ENCODE measurements at regions of chr19 and their contacts with region 1.

Region 1: GRCh38 chr19:52139252-52140031 is at the start of gene ZNF616:
- DNase-seq: peak; percentile 47 to 98 (median 82)
- ATAC-seq: peak; percentile 47
- H3K4me3 ChIP-seq: peak within 1 kb of the TSS; percentile 84 to 97
- H3K4me3 Mint-ChIP-seq: peak within 1 kb of the TSS; percentile 98
- H3K27ac ChIP-seq: peak within 1 kb of the TSS; percentile 79 to 90
- H3K27ac Mint-ChIP-seq: peak within 1 kb of the TSS; percentile 97
- H3K4me1 ChIP-seq: peaks cover 18% of the 10 kb centered on the region
- H3K4me1 Mint-ChIP-seq: peaks cover 42% of the 10 kb centered on the region
- H3K27me3 ChIP-seq: no peaks in the 10 kb centered on the region
- H3K27me3 Mint-ChIP-seq: no peaks in the 10 kb centered on the region
- CTCF ChIP-seq: peak; percentile 73
- total RNA-seq, gene ZNF616: 1.8 to 3.0 TPM

Region 2: DNA sequence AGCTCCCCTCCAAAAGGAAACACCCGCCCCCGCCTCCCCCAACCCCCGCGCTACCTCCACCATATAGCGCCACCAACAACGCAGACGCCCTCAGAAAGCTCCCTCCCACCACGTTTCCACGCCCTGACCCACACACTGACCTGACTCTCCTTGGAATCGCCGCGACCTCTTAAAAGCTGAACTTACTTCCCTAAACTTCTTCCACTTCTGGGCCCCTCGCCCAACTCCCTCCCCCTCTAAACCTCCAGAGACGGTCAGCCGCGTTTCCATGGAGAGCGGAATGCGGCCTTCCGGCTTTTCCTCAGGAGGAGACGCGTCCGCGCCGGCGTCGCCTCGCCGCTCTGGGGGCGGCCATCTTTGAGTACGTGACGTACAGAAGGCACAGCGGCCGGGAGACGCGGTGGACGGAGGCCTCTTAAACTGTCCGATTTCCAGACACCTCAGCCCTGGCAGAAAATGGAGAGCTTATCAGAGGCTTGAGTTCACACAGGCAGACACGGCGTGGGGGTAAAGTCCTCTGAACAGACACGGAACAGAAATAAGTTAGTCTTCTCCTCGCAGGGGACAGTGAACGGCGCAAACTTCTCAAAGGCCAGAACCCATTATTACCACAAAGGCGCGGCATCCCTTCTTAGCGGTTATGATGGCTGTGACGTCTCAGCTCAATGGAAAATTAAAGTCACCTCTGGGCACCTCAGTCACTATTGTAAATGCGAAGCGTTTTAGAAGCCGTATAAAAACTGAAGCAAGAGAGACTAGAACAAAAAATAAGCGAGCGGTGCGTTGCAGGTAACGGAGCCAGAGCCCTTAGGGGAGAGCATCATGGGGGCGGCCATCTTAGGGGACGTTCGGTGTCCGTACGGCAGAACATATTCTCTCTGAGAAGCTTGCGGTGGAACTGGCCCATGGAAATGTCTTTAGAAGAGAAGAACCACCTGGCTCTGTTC is 90.6 kb before region 1 on chr19 and contains the start of gene ZNF432:
- CTCF ChIA-PET with region 1: no interaction called
- POLR2A ChIA-PET with region 1: no interaction called
- intact Hi-C with region 1: loop called in 1 of 2 experiments (anchors 1 kb)
- DNase-seq: peak; percentile 62 to 91 (median 84)
- ATAC-seq: peak; percentile 83
- H3K4me3 ChIP-seq: peak within 1 kb of the TSS; percentile 92 to 94
- H3K4me3 Mint-ChIP-seq: peak within 1 kb of the TSS; percentile 99
- H3K27ac ChIP-seq: peak within 1 kb of the TSS; percentile 95 to 97
- H3K27ac Mint-ChIP-seq: peak within 1 kb of the TSS; percentile 100
- H3K4me1 ChIP-seq: peaks cover 7% of the 10 kb centered on the region
- H3K4me1 Mint-ChIP-seq: peaks cover 29% of the 10 kb centered on the region
- H3K27me3 ChIP-seq: no peaks in the 10 kb centered on the region
- H3K27me3 Mint-ChIP-seq: no peaks in the 10 kb centered on the region
- CTCF ChIP-seq: no peak
- total RNA-seq, gene ZNF432: 16.0 to 18.4 TPM

Region 3: DNA sequence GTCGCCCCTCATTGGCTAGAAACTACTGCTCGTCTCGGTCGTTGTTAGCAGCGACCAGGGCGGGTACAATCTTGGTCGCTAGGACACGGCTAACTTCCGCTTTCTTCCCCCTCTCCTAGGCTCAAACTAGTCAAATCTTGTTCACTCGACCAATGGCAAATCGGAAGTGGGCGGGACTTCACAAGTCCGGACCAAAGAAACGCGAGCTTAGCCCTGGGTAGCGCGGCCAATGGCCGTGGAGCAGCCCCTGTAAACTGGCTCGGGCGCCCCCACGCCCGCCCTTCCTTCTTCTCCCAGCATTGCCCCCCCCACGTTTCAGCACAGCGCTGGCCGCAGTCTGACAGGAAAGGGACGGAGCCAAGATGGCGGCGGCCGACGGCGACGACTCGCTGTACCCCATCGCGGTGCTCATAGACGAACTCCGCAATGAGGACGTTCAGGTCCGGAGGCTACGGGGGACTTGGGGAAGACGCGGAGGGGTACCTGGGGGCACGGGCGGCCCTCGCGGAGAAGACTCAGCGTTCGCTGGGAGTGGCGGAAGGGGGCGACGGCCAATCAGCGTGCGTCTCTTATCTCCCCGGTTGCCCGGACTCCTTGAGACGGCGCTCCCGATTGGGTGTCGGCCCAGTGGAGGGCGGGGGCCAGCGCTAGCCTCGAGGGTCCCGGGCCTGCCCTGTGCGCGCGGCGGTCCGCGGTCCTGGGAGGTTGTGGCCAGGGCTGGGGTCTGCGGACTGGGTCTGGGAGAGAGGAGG is 50.5 kb after region 1 on chr19 and contains the start of gene PPP2R1A:
- CTCF ChIA-PET with region 1: interaction called, 15 read pairs
- POLR2A ChIA-PET with region 1: interaction called, 9 read pairs
- intact Hi-C with region 1: loop called (anchors 1 kb)
- DNase-seq: peak; percentile 96 to 100 (median 98)
- ATAC-seq: peak; percentile 80
- H3K4me3 ChIP-seq: peak within 1 kb of the TSS; percentile 88 to 94
- H3K4me3 Mint-ChIP-seq: peak within 1 kb of the TSS; percentile 98
- H3K27ac ChIP-seq: peak within 1 kb of the TSS; percentile 97 to 98
- H3K27ac Mint-ChIP-seq: peak within 1 kb of the TSS; percentile 100
- H3K4me1 ChIP-seq: peaks cover 44% of the 10 kb centered on the region
- H3K4me1 Mint-ChIP-seq: peaks cover 48% of the 10 kb centered on the region
- H3K27me3 ChIP-seq: no peaks in the 10 kb centered on the region
- H3K27me3 Mint-ChIP-seq: no peaks in the 10 kb centered on the region
- CTCF ChIP-seq: no peak
- total RNA-seq, gene PPP2R1A: 186 to 188 TPM

Region 4: GRCh38 chr19:52296773-52297600 is 157.5 kb after region 1 on chr19 and contains the start of gene ZNF480:
- CTCF ChIA-PET with region 1: no interaction called
- POLR2A ChIA-PET with region 1: no interaction called
- intact Hi-C with region 1: loop called (anchors 1 kb)
- DNase-seq: peak; percentile 73 to 94 (median 89)
- ATAC-seq: peak; percentile 92
- H3K4me3 ChIP-seq: peak within 1 kb of the TSS; percentile 96 to 97
- H3K4me3 Mint-ChIP-seq: peak within 1 kb of the TSS; percentile 97
- H3K27ac ChIP-seq: peak within 1 kb of the TSS; percentile 93 to 98
- H3K27ac Mint-ChIP-seq: peak within 1 kb of the TSS; percentile 99
- H3K4me1 ChIP-seq: peaks cover 7% of the 10 kb centered on the region
- H3K4me1 Mint-ChIP-seq: peaks cover 20% of the 10 kb centered on the region
- H3K27me3 ChIP-seq: no peaks in the 10 kb centered on the region
- H3K27me3 Mint-ChIP-seq: no peaks in the 10 kb centered on the region
- CTCF ChIP-seq: no peak
- total RNA-seq, gene ZNF480: 7.8 to 9.1 TPM

Region 5: GRCh38 chr19:52637718-52638585 is 498.5 kb after region 1 on chr19 and contains the start of gene ZNF83:
- CTCF ChIA-PET with region 1: no interaction called
- POLR2A ChIA-PET with region 1: no interaction called
- intact Hi-C with region 1: loop called in 1 of 2 experiments (anchors 2 kb)
- DNase-seq: peak; percentile 85 to 96 (median 91)
- ATAC-seq: peak; percentile 95
- H3K4me3 ChIP-seq: peak within 1 kb of the TSS; percentile 68 to 97
- H3K4me3 Mint-ChIP-seq: peak within 1 kb of the TSS; percentile 95
- H3K27ac ChIP-seq: peak within 1 kb of the TSS; percentile 90 to 99
- H3K27ac Mint-ChIP-seq: peak within 1 kb of the TSS; percentile 98
- H3K4me1 ChIP-seq: peaks cover 14% of the 10 kb centered on the region
- H3K4me1 Mint-ChIP-seq: peaks cover 26% of the 10 kb centered on the region
- H3K27me3 ChIP-seq: no peaks in the 10 kb centered on the region
- H3K27me3 Mint-ChIP-seq: no peaks in the 10 kb centered on the region
- CTCF ChIP-seq: no peak
- total RNA-seq, gene ZNF83: 49.4 to 51.2 TPM

Region 6: GRCh38 chr19:52962394-52963246 is 823.2 kb after region 1 on chr19 and contains the start of gene ZNF816:
- CTCF ChIA-PET with region 1: no interaction called
- POLR2A ChIA-PET with region 1: no interaction called
- intact Hi-C with region 1: loop called in 1 of 2 experiments (anchors 1 kb)
- DNase-seq: peak; percentile 98 to 99 (median 99)
- ATAC-seq: peak; percentile 99
- H3K4me3 ChIP-seq: peak within 1 kb of the TSS; percentile 76 to 77
- H3K4me3 Mint-ChIP-seq: peak within 1 kb of the TSS; percentile 94
- H3K27ac ChIP-seq: peak within 1 kb of the TSS; percentile 61 to 67
- H3K27ac Mint-ChIP-seq: peak within 1 kb of the TSS; percentile 95
- H3K4me1 ChIP-seq: peaks cover 9% of the 10 kb centered on the region
- H3K4me1 Mint-ChIP-seq: peaks cover 31% of the 10 kb centered on the region
- H3K27me3 ChIP-seq: no peaks in the 10 kb centered on the region
- H3K27me3 Mint-ChIP-seq: no peaks in the 10 kb centered on the region
- CTCF ChIP-seq: no peak
- total RNA-seq, gene ZNF816: 5.9 to 6.4 TPM

Measured in CD8-positive, alpha-beta T cell (primary cell).